HEK293 (cell line): ENCODE measurements at regions of chr1 and their contacts with region 1.

Region 1: DNA sequence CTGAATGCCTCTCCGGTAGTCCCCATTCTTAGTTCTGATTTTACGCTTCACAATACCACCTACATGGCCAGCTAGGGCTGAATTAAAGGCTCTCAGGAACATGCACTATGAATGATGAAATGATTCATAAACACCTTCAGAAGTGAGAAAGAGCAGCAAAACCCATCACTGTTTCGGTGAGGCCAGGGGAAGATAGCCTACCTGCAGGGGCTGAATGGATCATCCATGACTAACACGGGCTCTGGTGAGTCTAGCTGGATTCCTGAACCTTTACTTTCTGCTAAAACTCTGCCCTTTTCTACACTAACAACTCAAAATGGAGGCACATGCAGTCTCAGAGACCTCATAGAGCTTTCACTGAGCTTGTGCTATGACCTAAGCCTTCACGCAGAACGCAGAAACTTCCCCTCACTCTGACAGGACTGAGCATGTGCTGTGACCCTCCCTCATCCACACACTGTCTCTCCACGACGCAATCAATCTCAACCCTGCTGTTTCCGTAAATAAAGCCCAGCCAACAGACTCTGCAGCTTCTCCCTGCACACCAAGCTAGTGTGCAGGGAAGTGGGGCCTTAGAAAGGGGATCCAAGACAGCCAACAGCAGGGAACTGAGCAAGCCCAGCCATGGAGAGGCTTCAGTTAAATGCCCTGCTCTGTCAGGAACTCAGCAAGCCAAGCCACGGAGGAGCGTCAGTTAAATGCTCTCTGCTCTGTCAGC is 207.8 kb downstream of the SLC45A1 start:
- H3K4me3 ChIP-seq: peak overlapping the region; percentile 49
- H3K27ac ChIP-seq: peak overlapping the region; percentile 50
- H3K4me1 ChIP-seq: no peaks in the 10 kb centered on the region
- CTCF ChIP-seq: no peak

Region 2: GRCh38 chr1:8497210-8497801 is 28.4 kb before region 1 on chr1:
- CTCF ChIA-PET with region 1: no interaction called
- POLR2A ChIA-PET with region 1: no interaction called
- H3K4me3 ChIP-seq: no peak overlapping the region
- H3K27ac ChIP-seq: no peak overlapping the region
- H3K4me1 ChIP-seq: no peaks in the 10 kb centered on the region
- CTCF ChIP-seq: no peak

Region 3: DNA sequence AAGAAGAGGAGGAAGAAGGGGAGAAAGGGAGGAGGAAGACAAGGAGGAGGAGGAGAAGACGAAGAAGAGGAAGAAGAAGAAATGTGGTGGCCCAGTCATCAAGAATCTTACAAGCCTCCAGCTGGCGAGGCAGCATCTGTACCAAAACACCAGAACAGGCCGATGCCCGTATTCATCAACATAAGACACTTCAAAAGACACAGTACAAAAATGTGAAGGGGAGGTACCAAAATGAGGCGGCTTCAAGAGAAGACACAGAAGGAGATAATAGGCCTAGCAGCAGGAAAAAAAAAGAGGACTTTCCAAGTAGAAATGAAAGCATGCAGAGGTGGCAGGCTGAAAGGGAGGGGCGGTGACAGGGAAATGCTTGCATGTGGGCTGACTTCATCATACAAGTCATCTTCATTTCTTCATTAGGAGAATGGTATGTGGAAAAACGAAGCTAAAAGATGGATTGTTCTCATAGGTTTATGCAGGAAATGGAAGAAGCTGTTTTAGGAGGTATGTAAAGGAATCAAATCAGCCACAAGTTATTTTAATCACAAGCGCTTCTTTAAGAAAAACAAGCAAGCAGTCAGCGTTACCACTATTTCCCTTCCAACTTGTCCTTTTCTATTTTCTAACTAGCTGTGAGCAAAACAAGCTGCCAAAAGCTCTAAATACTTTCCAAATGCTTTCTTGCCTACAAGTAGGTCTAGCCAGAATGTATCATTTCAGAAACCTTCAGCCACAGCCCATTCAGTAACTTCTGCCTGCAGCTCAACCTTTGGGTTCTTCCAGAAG is 15.5 kb before region 1 on chr1:
- CTCF ChIA-PET with region 1: no interaction called
- POLR2A ChIA-PET with region 1: interaction called, 11 read pairs
- H3K4me3 ChIP-seq: no peak overlapping the region
- H3K27ac ChIP-seq: no peak overlapping the region
- H3K4me1 ChIP-seq: no peaks in the 10 kb centered on the region
- CTCF ChIP-seq: no peak